Sciatic nerve (tissue), 2 donors: ENCODE measurements at regions of chr17 and their contacts with region 1.

Region 1: GRCh38 chr17:51860954-51861561 is 297.5 kb downstream of the CA10 start:
- DNase-seq: no peak
- ATAC-seq: no peak

Region 2: DNA sequence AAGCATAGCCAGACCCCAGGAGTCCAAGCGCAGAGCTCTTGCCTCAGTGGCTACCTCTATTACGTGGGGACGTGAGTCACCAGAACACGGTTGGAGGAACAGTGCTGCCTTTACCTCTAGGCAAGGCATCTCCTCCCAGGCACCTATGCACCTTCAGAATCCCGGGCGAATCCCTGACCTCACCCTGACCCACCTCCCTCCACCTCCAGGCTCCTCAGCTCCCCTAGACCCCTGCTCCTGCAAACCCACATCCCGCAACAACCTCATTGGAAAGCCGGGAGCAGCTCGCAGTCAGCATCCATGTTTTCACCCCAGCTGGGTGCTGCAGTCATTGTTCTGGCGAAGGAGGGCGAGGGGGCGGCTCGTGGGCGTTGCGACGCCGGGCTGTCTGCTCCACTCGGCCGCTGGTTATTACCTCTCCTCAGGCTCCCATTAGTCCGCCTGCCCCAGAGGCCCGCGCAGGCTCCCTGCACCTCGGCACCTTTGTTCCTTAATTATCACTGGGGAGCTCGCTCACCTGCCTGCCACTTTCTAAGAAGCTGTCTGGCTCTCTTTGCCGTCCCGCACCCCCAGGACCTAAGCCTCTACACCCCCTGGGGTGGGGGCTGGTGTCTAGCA is 1916.7 kb before region 1 on chr17:
- intact Hi-C with region 1: no loop called
- DNase-seq: no peak
- ATAC-seq: no peak

Region 3: GRCh38 chr17:51585514-51586104 is 275.4 kb before region 1 on chr17:
- intact Hi-C with region 1: no loop called
- DNase-seq: no peak
- ATAC-seq: no peak

Region 4: DNA sequence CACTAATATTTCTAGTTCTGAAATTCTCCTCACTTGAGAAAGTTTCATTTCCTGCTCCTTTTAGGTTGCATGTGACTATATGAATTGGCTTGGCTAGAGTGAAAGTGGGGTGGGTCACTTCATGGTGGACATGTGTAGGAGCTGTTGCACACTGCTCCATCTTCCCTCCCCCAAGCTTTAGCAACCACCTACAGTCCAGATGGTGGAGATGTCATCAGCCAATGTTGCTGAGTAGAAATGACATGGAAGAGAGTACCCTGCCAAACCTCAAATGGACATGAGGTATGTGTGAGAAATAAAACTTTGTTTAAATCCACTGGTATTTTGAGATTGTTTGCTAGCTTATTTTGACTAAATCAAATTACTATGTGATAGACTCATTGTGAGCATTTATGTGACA is 15.9 kb after region 1 on chr17:
- intact Hi-C with region 1: loop called (anchors 1 kb)
- DNase-seq: no peak
- ATAC-seq: no peak